Heart right ventricle (tissue), 16 donors: ENCODE measurements at regions of chr19 and their contacts with region 1.

Region 1: DNA sequence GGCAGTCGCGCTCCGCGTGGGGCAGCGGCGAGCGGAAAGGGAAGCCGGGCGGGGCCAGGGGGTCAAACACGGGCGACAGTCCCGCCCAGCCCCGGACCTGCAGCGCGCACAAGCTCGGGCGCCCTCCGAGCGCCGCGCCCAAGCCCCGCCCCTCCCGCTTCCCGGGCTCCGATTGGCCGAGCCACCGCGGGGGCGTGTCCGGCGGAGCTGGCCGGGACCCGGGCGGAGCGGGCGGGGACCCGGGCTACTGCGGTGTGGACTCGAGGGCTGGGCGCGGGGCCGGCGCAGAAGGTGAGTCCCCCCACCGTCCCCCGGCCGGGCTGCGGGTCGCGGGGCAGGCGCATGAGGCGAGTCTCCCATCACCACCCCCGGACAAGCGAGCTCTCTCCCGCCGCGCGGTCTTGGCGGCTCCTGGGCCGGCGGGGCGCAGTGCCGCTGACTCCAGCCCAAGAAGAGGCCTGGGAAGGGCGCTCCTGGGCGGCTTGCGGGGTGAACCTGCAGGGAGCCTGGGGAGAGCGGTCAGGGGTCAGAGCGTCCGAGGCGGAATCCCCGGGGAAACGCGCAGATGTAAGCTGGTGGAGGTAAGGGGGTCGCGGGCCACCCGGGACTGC is at the start of gene PLEKHF1:
- DNase-seq: peak; percentile 89 to 94
- ATAC-seq: peak; percentile 79 to 93 (median 88)
- H3K4me3 ChIP-seq: peak within 1 kb of the TSS; percentile 62 to 98 (median 92)
- H3K27ac ChIP-seq: peak within 1 kb of the TSS; percentile 85 to 97 (median 91)
- H3K4me1 ChIP-seq: peaks cover 29 to 83% (median 58%) of the 10 kb centered on the region in 9 donors
- H3K27me3 ChIP-seq: no peaks in the 10 kb centered on the region
- CTCF ChIP-seq: no peak
- total RNA-seq, gene PLEKHF1: 7.0 to 38.8 (median 16.5) TPM

Region 2: GRCh38 chr19:29610563-29611271 is 54.6 kb before region 1 on chr19:
- intact Hi-C with region 1: loop called in 6 of 10 experiments (anchors 1 to 5 kb)
- DNase-seq: peak; percentile 75 to 81
- ATAC-seq: peak; percentile 65 to 83 (median 74)
- H3K4me3 ChIP-seq: no peak overlapping the region
- H3K27ac ChIP-seq: no peak overlapping the region
- H3K4me1 ChIP-seq: peaks cover 0 to 15% (median 8%) of the 10 kb centered on the region in 9 donors
- H3K27me3 ChIP-seq: no peaks in the 10 kb centered on the region
- CTCF ChIP-seq: peak; percentile 70 to 92 (median 89)

Region 3: GRCh38 chr19:29645911-29646310 is 19.4 kb before region 1 on chr19:
- intact Hi-C with region 1: loop called in 1 of 10 experiments (anchors 2 kb)
- DNase-seq: peak; percentile 61 to 64
- ATAC-seq: peak; percentile 76 to 96 (median 94)
- H3K4me3 ChIP-seq: peak overlapping the region in 1 of 10 donors; percentile 1
- H3K27ac ChIP-seq: peak overlapping the region in 8 of 10 donors; percentile 50 to 80 (median 70)
- H3K4me1 ChIP-seq: peaks cover 6 to 24% (median 16%) of the 10 kb centered on the region in 9 donors
- H3K27me3 ChIP-seq: no peaks in the 10 kb centered on the region
- CTCF ChIP-seq: no peak

Region 4: DNA sequence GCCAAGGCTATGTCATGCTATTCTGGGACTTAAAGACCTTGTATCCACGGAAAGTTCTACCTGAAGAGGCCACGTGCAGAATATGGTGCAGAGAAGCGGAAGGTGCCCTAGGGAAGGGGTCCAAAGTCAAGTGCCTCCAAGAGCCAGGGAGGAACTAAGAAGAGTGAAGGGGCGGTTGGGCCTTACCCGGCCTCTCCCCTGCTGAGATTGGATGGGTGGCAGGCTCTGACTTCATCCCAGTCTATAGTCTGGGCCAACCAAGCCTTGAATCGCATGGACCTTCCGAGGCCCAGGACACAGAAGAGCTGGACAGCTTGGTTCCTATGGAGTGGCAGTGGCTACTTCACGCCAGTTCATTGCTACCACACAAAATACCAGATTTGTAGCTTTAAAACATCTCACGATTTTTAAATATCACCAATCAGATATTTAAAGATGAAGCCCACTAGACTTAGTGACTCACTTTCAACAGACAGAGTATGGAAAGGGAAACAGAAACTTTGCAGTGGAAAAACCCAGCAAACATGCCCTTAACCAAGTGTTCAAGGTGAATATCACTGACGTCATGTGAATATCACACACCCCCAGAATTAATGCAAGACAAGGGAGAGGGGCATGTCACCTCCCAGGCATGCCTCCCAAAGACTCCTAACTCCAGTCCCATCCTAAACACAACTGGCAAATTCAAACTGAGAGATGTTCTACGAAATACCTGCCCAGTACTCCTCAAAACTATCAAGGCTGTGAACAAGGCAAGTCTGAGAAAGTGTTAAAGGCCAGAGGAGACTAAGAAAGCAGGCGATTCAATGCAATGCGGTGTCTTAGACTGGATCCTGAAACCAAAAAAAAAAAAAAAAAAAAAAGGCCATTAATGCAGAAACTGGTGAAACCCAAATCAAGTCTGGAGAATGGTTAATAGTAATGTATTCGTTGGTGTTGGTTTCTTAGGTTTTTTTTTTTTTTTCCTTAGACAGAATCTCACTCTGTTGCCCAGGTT is 39.5 kb after region 1 on chr19:
- intact Hi-C with region 1: loop called in 4 of 10 experiments (anchors 5 to 10 kb)
- DNase-seq: no peak
- ATAC-seq: no peak
- H3K4me3 ChIP-seq: no peak overlapping the region
- H3K27ac ChIP-seq: no peak overlapping the region
- H3K4me1 ChIP-seq: peaks cover 3 to 34% (median 20%) of the 10 kb centered on the region in 9 donors
- H3K27me3 ChIP-seq: no peaks in the 10 kb centered on the region
- CTCF ChIP-seq: no peak

Region 5: DNA sequence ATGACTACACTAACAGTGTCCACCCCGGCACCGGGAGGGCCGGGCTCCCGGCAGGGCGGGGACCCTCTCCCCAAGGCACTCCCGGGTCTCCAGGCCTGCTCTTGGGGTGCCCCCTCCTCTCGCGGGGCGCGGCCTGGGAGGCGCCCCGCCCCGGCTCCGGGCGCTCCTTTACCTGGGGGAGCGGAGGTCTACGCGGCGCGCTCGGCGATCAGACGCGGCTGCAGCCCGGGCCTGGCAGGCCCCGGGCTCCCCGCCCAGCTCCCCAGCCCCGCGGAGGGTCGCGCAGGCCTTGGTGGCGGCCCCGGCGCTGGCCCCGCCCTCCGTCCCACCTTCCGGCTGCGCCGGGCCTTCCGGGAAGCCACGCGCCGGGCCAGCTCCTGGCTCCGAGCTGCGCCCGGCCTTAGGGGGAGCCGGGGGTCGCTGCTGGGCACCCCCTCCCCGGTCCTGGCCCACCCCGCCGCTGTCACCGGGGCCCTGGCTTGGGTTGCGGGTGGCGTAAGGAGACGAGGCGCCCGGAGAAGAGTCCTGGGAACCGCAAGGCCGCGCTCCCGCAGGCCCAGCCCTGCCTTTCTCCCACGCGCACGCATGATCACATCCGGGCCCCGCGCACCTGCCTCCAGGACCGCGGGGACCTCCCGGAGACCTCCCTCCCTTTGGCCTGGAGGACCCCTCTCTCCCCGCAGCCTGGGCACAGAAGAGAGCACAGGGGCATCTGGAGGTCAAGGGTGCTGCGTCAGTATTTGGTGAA is 49.8 kb after region 1 on chr19 and contains the start of gene C19orf12:
- intact Hi-C with region 1: loop called in 5 of 10 experiments (anchors 2 to 10 kb)
- DNase-seq: peak; percentile 53 to 73
- ATAC-seq: peak; percentile 76 to 92 (median 84)
- H3K4me3 ChIP-seq: peak within 1 kb of the TSS; percentile 82 to 99 (median 94)
- H3K27ac ChIP-seq: peak within 1 kb of the TSS; percentile 92 to 100 (median 98)
- H3K4me1 ChIP-seq: peaks cover 0 to 49% (median 23%) of the 10 kb centered on the region in 9 donors
- H3K27me3 ChIP-seq: no peaks in the 10 kb centered on the region
- CTCF ChIP-seq: peak in 1 of 9 donors; percentile 4
- total RNA-seq, gene C19orf12: 30.3 to 83.3 (median 40.0) TPM